Sigmoid colon (tissue), 7 donors: ENCODE measurements at regions of chr13 and their contacts with region 1.

Region 1: DNA sequence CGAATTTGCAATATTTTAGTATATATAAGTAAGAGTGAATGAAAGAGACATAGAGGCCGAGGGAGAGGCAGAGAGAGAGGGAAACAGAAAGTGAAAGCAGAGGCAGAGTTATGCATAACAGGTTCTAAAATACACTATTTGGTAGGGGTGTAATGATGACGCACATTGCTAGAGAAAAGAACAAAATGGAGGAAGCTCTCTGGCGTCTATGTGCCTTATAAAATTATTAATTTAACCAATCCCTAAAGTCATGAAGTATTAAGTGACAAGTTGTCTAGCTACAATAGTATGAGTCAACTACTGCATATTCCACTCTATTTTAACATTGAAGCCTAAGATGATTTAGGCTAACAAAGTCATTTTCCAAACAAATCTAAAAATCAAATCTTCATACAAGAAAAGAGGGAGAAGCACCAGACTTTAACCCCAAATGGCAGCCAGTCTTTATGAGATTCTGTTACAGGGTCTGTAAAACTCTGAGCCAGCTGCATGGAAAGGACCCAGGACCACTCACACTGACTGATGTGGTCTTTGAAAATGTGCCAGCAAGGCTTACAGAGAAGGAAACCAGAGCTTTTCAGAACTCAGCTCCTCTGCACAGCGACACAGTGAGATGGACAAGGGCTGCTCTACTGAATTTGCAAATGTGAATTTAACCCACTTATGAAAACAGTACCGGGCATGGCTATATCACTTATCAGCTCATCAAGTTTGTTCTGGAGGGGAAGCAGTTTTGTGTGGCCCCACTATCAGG is 99.0 kb upstream of the SERP2 start:
- DNase-seq: no peak
- H3K4me3 ChIP-seq: peak overlapping the region in 2 of 4 donors; percentile 12
- H3K27ac ChIP-seq: peak overlapping the region; percentile 81 to 87 (median 84)
- H3K4me1 ChIP-seq: peaks cover 0 to 80% (median 70%) of the 10 kb centered on the region in 4 donors
- H3K27me3 ChIP-seq: no peaks in the 10 kb centered on the region
- CTCF ChIP-seq: no peak
- EP300 ChIP-seq: peak; percentile 30 to 94 (median 88)
- POLR2A ChIP-seq: no peak

Region 2: GRCh38 chr13:44212633-44213403 is 61.8 kb before region 1 on chr13:
- intact Hi-C with region 1: no loop called
- DNase-seq: peak; percentile 87
- H3K4me3 ChIP-seq: no peak overlapping the region
- H3K27ac ChIP-seq: peak overlapping the region in 3 of 4 donors; percentile 12 to 54 (median 44)
- H3K4me1 ChIP-seq: peaks cover 0 to 36% (median 2%) of the 10 kb centered on the region in 4 donors
- H3K27me3 ChIP-seq: no peaks in the 10 kb centered on the region
- CTCF ChIP-seq: no peak
- EP300 ChIP-seq: no peak
- POLR2A ChIP-seq: no peak

Region 3: GRCh38 chr13:44224450-44225149 is 50.0 kb before region 1 on chr13:
- intact Hi-C with region 1: loop called (anchors 2 kb)
- DNase-seq: peak; percentile 80
- H3K4me3 ChIP-seq: no peak overlapping the region
- H3K27ac ChIP-seq: peak overlapping the region; percentile 72 to 87 (median 81)
- H3K4me1 ChIP-seq: peaks cover 0 to 57% (median 52%) of the 10 kb centered on the region in 4 donors
- H3K27me3 ChIP-seq: no peaks in the 10 kb centered on the region
- CTCF ChIP-seq: no peak
- EP300 ChIP-seq: peak; percentile 78 to 94 (median 82)
- POLR2A ChIP-seq: no peak